B cell (primary cell): ENCODE measurements at regions of chr13 and their contacts with region 1.

Region 1: GRCh38 chr13:49258089-49258796 is 10.5 kb downstream of the CDADC1 start:
- DNase-seq: peak; percentile 41
- ATAC-seq: peak; percentile 31
- H3K4me3 ChIP-seq: peak overlapping the region in 4 of 5 experiments; percentile 38 to 69 (median 50)
- H3K4me3 Mint-ChIP-seq: peak overlapping the region; percentile 88
- H3K27ac ChIP-seq: peak overlapping the region; percentile 13 to 65
- H3K27ac Mint-ChIP-seq: peak overlapping the region; percentile 32
- H3K4me1 ChIP-seq: peaks cover 0 to 7% of the 10 kb centered on the region in 2 donors
- H3K4me1 Mint-ChIP-seq: peaks cover 15% of the 10 kb centered on the region
- H3K27me3 ChIP-seq: no peaks in the 10 kb centered on the region
- H3K27me3 Mint-ChIP-seq: no peaks in the 10 kb centered on the region
- CTCF ChIP-seq: no peak

Region 2: DNA sequence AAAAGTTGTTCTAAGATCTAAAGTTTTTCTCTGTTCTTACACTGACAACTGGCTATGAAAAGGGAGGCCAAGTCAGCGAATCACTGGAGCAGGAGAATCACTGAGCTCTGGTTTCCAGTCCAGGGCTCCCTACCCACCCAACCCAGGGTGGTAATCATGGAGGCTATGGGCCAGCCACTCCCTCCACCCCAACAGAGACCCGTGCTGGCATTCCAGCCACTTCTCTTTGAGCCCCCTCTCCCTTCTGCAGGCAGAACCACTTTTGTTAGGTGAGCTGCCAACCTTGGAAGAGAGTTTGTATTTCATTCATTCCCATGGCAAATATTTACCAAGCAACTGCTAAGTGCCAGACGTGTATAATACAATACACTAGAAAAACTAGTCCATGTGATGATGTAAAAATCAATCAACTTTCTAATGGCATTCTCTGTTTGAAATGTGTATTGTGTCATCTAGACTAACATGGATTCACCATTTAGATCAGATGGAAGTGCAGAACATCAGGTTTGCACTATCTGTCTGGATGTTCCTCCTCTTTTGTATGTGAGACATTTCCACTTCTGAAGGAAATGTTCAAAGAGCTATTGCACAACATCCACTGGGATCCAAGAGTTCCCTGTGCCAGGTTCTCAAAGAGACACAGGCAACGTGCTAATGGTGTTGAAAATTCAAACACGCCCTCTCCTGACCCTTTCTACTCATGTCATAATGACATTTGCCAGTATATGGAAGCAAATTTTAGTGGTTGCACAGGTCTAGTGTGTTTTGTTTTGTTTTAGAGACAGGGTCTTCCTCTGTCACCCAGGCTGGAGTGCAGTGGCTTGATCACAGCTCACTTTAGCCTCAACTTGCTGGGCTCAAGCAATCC is 32.8 kb before region 1 on chr13:
- CTCF ChIA-PET with region 1: no interaction called
- POLR2A ChIA-PET with region 1: no interaction called
- intact Hi-C with region 1: no loop called
- DNase-seq: no peak
- ATAC-seq: no peak
- H3K4me3 ChIP-seq: no peak overlapping the region
- H3K4me3 Mint-ChIP-seq: no peak overlapping the region
- H3K27ac ChIP-seq: no peak overlapping the region
- H3K27ac Mint-ChIP-seq: no peak overlapping the region
- H3K4me1 ChIP-seq: peaks cover 2 to 9% of the 10 kb centered on the region in 2 donors
- H3K4me1 Mint-ChIP-seq: peaks cover 3% of the 10 kb centered on the region
- H3K27me3 ChIP-seq: peaks cover 0 to 17% (median 10%) of the 10 kb centered on the region in 4 experiments
- H3K27me3 Mint-ChIP-seq: peaks cover 31% of the 10 kb centered on the region
- CTCF ChIP-seq: no peak

Region 3: GRCh38 chr13:49247643-49248621 is 10.3 kb before region 1 on chr13 and contains the start of gene CDADC1:
- CTCF ChIA-PET with region 1: interaction called, 3 read pairs
- POLR2A ChIA-PET with region 1: interaction called, 7 read pairs
- intact Hi-C with region 1: loop called (anchors 1 kb)
- DNase-seq: peak; percentile 92
- ATAC-seq: peak; percentile 95
- H3K4me3 ChIP-seq: peak within 1 kb of the TSS; percentile 86 to 92 (median 89)
- H3K4me3 Mint-ChIP-seq: peak within 1 kb of the TSS; percentile 100
- H3K27ac ChIP-seq: peak within 1 kb of the TSS; percentile 76 to 86
- H3K27ac Mint-ChIP-seq: peak within 1 kb of the TSS; percentile 97
- H3K4me1 ChIP-seq: peaks cover 10 to 11% of the 10 kb centered on the region in 2 donors
- H3K4me1 Mint-ChIP-seq: peaks cover 26% of the 10 kb centered on the region
- H3K27me3 ChIP-seq: no peaks in the 10 kb centered on the region
- H3K27me3 Mint-ChIP-seq: no peaks in the 10 kb centered on the region
- CTCF ChIP-seq: no peak
- total RNA-seq, gene CDADC1: 14.5 and 15.1 TPM in 2 replicates